Natural killer cell (primary cell): ENCODE measurements at regions of chr16 and their contacts with region 1.

Region 1: GRCh38 chr16:67928561-67929364 is 2.9 kb downstream of the CTRL start:
- DNase-seq: peak; percentile 54 to 85
- ATAC-seq: peak; percentile 78 to 94 (median 85)
- H3K4me3 ChIP-seq: no peak overlapping the region
- H3K4me3 Mint-ChIP-seq: no peak overlapping the region
- H3K27ac ChIP-seq: no peak overlapping the region
- H3K27ac Mint-ChIP-seq: peak overlapping the region in 1 of 2 donors; percentile 47
- H3K4me1 ChIP-seq: peaks cover 7% of the 10 kb centered on the region
- H3K4me1 Mint-ChIP-seq: peaks cover 3 to 12% of the 10 kb centered on the region in 2 donors
- H3K27me3 ChIP-seq: no peaks in the 10 kb centered on the region
- H3K27me3 Mint-ChIP-seq: no peaks in the 10 kb centered on the region
- CTCF ChIP-seq: peak; percentile 75

Region 2: GRCh38 chr16:67672739-67673662 is 255.8 kb before region 1 on chr16:
- intact Hi-C with region 1: loop called (anchors 2 kb)
- DNase-seq: peak in 1 of 2 donors; percentile 69
- ATAC-seq: peak in 2 of 3 donors; percentile 10 to 29
- H3K4me3 ChIP-seq: no peak overlapping the region
- H3K4me3 Mint-ChIP-seq: no peak overlapping the region
- H3K27ac ChIP-seq: no peak overlapping the region
- H3K27ac Mint-ChIP-seq: no peak overlapping the region
- H3K4me1 ChIP-seq: peaks cover 13% of the 10 kb centered on the region
- H3K4me1 Mint-ChIP-seq: peaks cover 0 to 7% of the 10 kb centered on the region in 2 donors
- H3K27me3 ChIP-seq: no peaks in the 10 kb centered on the region
- H3K27me3 Mint-ChIP-seq: no peaks in the 10 kb centered on the region
- CTCF ChIP-seq: peak; percentile 49

Region 3: DNA sequence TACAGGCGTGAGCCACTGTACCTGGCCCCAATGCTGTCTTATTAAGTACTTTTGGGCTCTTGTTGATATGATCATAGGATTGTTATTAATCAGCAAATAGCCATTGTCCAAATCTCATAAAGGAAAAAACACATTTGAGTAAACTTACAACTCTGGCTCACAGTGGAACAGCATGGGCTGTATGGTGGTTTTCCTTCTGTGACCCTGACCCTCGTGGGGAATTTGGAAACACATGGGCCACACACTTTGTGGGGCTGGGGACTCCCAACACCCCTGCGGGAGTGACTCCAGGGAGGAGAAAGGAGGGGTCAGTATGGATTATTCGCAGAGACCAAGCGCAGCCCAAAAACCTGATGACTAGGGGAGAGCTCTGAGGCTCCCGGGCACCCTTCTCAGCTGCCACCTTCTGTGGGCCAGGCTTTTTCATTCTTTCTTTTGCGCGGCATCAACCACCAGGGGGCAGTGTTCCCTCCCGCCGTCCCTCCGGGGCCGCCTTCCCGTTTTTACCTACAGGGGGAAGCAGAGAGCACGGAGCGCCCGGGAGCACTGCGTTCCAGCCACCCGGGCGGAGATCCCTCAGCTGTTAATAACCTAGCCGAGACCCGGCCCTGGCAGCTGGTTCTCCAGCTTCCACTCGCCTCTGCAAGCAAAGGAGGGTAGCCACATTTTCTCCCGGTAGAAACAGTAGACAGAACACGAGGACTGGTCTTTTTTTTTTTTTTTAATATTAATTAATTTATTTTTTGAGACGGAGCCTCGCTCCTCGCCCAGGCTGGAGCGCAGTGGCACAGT is 112.3 kb before region 1 on chr16:
- intact Hi-C with region 1: loop called (anchors 2 kb)
- DNase-seq: peak; percentile 91 to 94
- ATAC-seq: peak; percentile 99
- H3K4me3 ChIP-seq: no peak overlapping the region
- H3K4me3 Mint-ChIP-seq: no peak overlapping the region
- H3K27ac ChIP-seq: no peak overlapping the region
- H3K27ac Mint-ChIP-seq: peak overlapping the region; percentile 31 to 45
- H3K4me1 ChIP-seq: peaks cover 8% of the 10 kb centered on the region
- H3K4me1 Mint-ChIP-seq: peaks cover 0 to 7% of the 10 kb centered on the region in 2 donors
- H3K27me3 ChIP-seq: no peaks in the 10 kb centered on the region
- H3K27me3 Mint-ChIP-seq: no peaks in the 10 kb centered on the region
- CTCF ChIP-seq: peak; percentile 100

Region 4: GRCh38 chr16:67883872-67884261 is 44.9 kb before region 1 on chr16:
- intact Hi-C with region 1: loop called (anchors 5 kb)
- DNase-seq: peak; percentile 72 to 85
- ATAC-seq: peak; percentile 59 to 90 (median 87)
- H3K4me3 ChIP-seq: no peak overlapping the region
- H3K4me3 Mint-ChIP-seq: no peak overlapping the region
- H3K27ac ChIP-seq: no peak overlapping the region
- H3K27ac Mint-ChIP-seq: peak overlapping the region in 1 of 2 donors; percentile 58
- H3K4me1 ChIP-seq: no peaks in the 10 kb centered on the region
- H3K4me1 Mint-ChIP-seq: peaks cover 0 to 4% of the 10 kb centered on the region in 2 donors
- H3K27me3 ChIP-seq: no peaks in the 10 kb centered on the region
- H3K27me3 Mint-ChIP-seq: no peaks in the 10 kb centered on the region
- CTCF ChIP-seq: peak; percentile 81

Region 5: GRCh38 chr16:68022704-68023522 is 94.2 kb after region 1 on chr16 and contains the starts of genes DDX28 and DUS2:
- intact Hi-C with region 1: no loop called
- DNase-seq: peak; percentile 97 to 98
- ATAC-seq: peak; percentile 90 to 96 (median 93)
- H3K4me3 ChIP-seq: peak within 1 kb of the TSS; percentile 83
- H3K4me3 Mint-ChIP-seq: peak within 1 kb of the TSS; percentile 99
- H3K27ac ChIP-seq: peak within 1 kb of the TSS; percentile 70
- H3K27ac Mint-ChIP-seq: peak within 1 kb of the TSS; percentile 91 to 96
- H3K4me1 ChIP-seq: peaks cover 26% of the 10 kb centered on the region
- H3K4me1 Mint-ChIP-seq: peaks cover 16 to 31% of the 10 kb centered on the region in 2 donors
- H3K27me3 ChIP-seq: no peaks in the 10 kb centered on the region
- H3K27me3 Mint-ChIP-seq: no peaks in the 10 kb centered on the region
- CTCF ChIP-seq: no peak
- total RNA-seq, gene DDX28: 17.4 to 19.0 (median 17.9) TPM
- total RNA-seq, gene DUS2: 21.6 to 24.2 (median 22.7) TPM